ENCODE measurements at regions of chr4 and their contacts with region 1.

Region 1: GRCh38 chr4:45072981-45073380 is 346.6 kb upstream of the GNPDA2 start:
- DNase-seq: no peak
- ATAC-seq: no peak
- H3K4me3 ChIP-seq: no peak overlapping the region
- H3K4me3 Mint-ChIP-seq: no peak overlapping the region
- H3K27ac ChIP-seq: no peak overlapping the region
- H3K27ac Mint-ChIP-seq: no peak overlapping the region
- H3K4me1 ChIP-seq: no peaks in the 10 kb centered on the region
- H3K4me1 Mint-ChIP-seq: no peaks in the 10 kb centered on the region
- H3K27me3 ChIP-seq: no peaks in the 10 kb centered on the region
- H3K27me3 Mint-ChIP-seq: no peaks in the 10 kb centered on the region
- CTCF ChIP-seq: no peak

Region 2: DNA sequence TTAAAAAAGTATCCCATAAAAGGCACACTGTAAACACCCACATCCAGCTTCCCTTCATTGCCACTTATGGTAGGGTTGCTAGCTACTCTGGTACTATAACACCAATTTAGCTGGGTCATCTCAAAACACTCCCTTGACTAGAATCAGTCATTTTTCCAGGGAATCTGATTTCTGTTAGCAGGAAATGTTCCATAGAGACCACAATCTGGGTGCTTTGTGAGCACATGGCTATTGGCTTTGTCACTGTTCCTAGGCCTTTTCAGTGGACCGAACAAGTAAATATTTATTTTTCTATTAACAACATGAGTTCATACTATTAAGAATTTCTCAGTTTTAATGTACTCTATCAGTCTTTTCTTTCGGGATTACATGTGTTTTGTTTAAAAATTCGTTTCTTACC is 58.0 kb after region 1 on chr4:
- CTCF ChIA-PET with region 1: no interaction called
- POLR2A ChIA-PET with region 1: no interaction called
- intact Hi-C with region 1: loop called in 1 of 2 experiments (anchors 2 kb)
- DNase-seq: no peak
- ATAC-seq: no peak
- H3K4me3 ChIP-seq: no peak overlapping the region
- H3K4me3 Mint-ChIP-seq: no peak overlapping the region
- H3K27ac ChIP-seq: no peak overlapping the region
- H3K27ac Mint-ChIP-seq: no peak overlapping the region
- H3K4me1 ChIP-seq: no peaks in the 10 kb centered on the region
- H3K4me1 Mint-ChIP-seq: no peaks in the 10 kb centered on the region
- H3K27me3 ChIP-seq: no peaks in the 10 kb centered on the region
- H3K27me3 Mint-ChIP-seq: no peaks in the 10 kb centered on the region
- CTCF ChIP-seq: no peak